Esophagus muscularis mucosa (tissue), 4 donors: ENCODE measurements at regions of chr4 and their contacts with region 1.

Region 1: GRCh38 chr4:74444891-74445642 is at the start of gene AREG:
- DNase-seq: peak; percentile 94
- H3K4me3 ChIP-seq: peak within 1 kb of the TSS; percentile 66 to 71 (median 70)
- H3K27ac ChIP-seq: peak within 1 kb of the TSS; percentile 85 to 89 (median 88)
- H3K4me1 ChIP-seq: peaks cover 0 to 20% (median 10%) of the 10 kb centered on the region in 4 donors
- H3K27me3 ChIP-seq: no peaks in the 10 kb centered on the region
- CTCF ChIP-seq: peak; percentile 53 to 65 (median 55)
- EP300 ChIP-seq: peak; percentile 67
- POLR2A ChIP-seq: no peak
- total RNA-seq, gene AREG: 1.4 to 18.6 (median 4.4) TPM

Region 2: DNA sequence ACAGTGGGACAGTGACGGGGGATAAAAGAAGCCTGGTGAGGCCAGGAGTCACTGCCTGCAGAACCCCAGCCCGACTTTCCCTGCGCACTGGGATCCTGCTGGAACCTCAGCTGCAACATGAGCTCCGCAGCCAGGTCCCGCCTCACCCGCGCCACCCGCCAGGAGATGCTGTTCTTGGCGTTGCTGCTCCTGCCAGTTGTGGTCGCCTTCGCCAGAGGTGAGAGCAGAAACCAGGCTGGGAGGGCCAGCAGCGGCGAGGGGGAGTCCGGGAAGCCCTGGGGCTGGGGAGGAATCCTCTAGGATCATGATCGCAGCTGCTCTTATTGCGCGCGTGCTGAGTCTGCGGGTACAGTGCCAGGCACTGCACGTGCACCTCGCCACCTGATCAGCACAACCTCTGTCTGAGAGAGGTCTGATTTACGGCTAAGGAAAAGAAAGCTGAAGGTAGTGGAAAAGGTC is 591.8 kb before region 1 on chr4 and contains the start of gene PF4V1:
- intact Hi-C with region 1: no loop called
- DNase-seq: no peak
- H3K4me3 ChIP-seq: peak within 1 kb of the TSS in 3 of 4 donors; percentile 14 to 32 (median 22)
- H3K27ac ChIP-seq: no peak within 1 kb of the TSS
- H3K4me1 ChIP-seq: peaks cover 0 to 9% (median 7%) of the 10 kb centered on the region in 4 donors
- H3K27me3 ChIP-seq: peaks cover 0 to 31% (median 0%) of the 10 kb centered on the region in 4 donors
- CTCF ChIP-seq: no peak
- EP300 ChIP-seq: no peak
- POLR2A ChIP-seq: no peak
- total RNA-seq, gene PF4V1: not detected

Region 3: GRCh38 chr4:74267998-74268606 is 177.0 kb before region 1 on chr4:
- intact Hi-C with region 1: no loop called
- DNase-seq: no peak
- H3K4me3 ChIP-seq: no peak overlapping the region
- H3K27ac ChIP-seq: no peak overlapping the region
- H3K4me1 ChIP-seq: no peaks in the 10 kb centered on the region
- H3K27me3 ChIP-seq: no peaks in the 10 kb centered on the region
- CTCF ChIP-seq: no peak
- EP300 ChIP-seq: no peak
- POLR2A ChIP-seq: no peak

Region 4: GRCh38 chr4:74320559-74321118 is 124.4 kb before region 1 on chr4:
- intact Hi-C with region 1: no loop called
- DNase-seq: no peak
- H3K4me3 ChIP-seq: no peak overlapping the region
- H3K27ac ChIP-seq: no peak overlapping the region
- H3K4me1 ChIP-seq: peaks cover 0 to 8% (median 4%) of the 10 kb centered on the region in 4 donors
- H3K27me3 ChIP-seq: no peaks in the 10 kb centered on the region
- CTCF ChIP-seq: peak; percentile 45 to 54 (median 46)
- EP300 ChIP-seq: no peak
- POLR2A ChIP-seq: no peak

Region 5: DNA sequence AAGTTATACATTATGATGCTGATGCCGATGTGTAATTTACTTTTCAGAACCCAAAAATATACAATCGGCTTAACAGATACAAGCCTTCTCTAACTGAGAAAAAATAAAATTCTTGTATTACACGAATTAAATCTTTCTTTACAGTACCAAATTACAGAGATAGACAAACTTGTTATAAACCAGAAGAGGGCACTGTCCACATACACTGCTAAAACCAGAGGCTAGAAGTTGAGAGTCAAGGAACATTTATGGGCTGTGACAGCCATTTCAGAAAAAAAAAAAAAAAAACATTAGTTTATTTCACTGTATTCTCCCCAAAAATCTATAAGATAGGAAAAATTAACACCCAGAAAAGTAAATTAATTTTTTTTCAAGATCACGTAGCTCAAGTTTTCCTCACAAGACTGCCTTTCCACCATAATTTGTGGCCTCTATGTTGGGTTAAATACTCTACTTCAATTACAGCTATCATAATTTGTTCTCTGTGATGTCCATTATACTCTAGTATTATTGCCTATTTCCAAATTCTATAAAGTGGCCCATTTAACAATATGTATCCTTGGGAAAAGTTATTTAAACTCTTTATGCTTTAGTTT is 68.1 kb before region 1 on chr4:
- intact Hi-C with region 1: loop called (anchors 5 kb)
- DNase-seq: no peak
- H3K4me3 ChIP-seq: no peak overlapping the region
- H3K27ac ChIP-seq: peak overlapping the region in 2 of 4 donors; percentile 38 to 41
- H3K4me1 ChIP-seq: peaks cover 0 to 32% (median 11%) of the 10 kb centered on the region in 4 donors
- H3K27me3 ChIP-seq: no peaks in the 10 kb centered on the region
- CTCF ChIP-seq: peak; percentile 55 to 62 (median 59)
- EP300 ChIP-seq: no peak
- POLR2A ChIP-seq: no peak

Region 6: DNA sequence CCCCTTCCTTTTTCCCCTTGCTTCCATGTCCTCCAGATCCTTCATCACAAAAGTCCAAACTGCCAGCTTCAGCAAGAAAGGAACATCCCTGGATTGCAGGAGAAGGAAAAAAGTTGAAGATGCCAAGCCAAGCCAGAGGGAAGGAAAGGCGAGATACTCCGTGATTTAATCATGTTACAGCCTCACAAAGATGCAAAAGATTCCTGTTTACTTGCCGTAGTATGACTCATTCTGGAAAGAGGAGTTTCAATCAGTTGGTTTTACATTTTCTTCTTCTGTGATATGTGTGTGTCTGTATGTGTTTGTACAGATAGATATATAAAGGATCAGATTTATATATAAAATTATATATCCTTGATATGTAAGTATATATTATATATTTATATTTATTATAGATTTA is 279.9 kb after region 1 on chr4:
- intact Hi-C with region 1: no loop called
- DNase-seq: no peak
- H3K4me3 ChIP-seq: no peak overlapping the region
- H3K27ac ChIP-seq: no peak overlapping the region
- H3K4me1 ChIP-seq: no peaks in the 10 kb centered on the region
- H3K27me3 ChIP-seq: no peaks in the 10 kb centered on the region
- CTCF ChIP-seq: no peak
- EP300 ChIP-seq: no peak
- POLR2A ChIP-seq: no peak